SK-N-SH (cell line): ENCODE measurements at regions of chr6 and their contacts with region 1.

Region 1: DNA sequence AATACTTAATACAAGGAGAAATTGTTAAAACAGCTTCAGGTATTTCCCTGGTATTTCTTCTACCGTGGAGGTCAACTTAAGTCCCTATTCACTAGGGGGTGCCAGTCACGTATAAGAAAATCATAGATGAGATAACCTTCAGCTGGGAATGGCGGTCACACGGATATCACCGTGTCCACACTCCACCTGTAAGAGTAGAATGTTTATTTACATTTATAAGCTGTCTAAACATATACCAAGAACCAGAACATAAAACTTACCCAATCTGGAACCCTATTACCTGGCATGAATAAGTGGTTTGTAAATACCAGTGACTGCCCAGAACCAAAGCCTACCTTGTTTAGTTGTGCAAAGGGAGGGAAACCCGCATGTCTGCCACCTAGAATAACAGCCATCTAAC is 1.9 kb upstream of the ELOVL4 start:
- DNase-seq: peak; percentile 49
- H3K4me3 ChIP-seq: peak overlapping the region in 1 of 2 experiments; percentile 9; a peak in 1 of 4 replicates
- H3K27ac ChIP-seq: no peak overlapping the region
- H3K4me1 ChIP-seq: peaks cover 4 to 17% of the 10 kb centered on the region in 2 experiments; a peak in 3 of 4 replicates
- H3K27me3 ChIP-seq: no peaks in the 10 kb centered on the region
- CTCF ChIP-seq: peak; percentile 84
- EP300 ChIP-seq: no peak
- RAD21 ChIP-seq: peak; percentile 79

Region 2: GRCh38 chr6:79257381-79258205 is 691.6 kb before region 1 on chr6:
- CTCF ChIA-PET with region 1: no interaction called
- POLR2A ChIA-PET with region 1: no interaction called
- DNase-seq: no peak
- H3K4me3 ChIP-seq: no peak overlapping the region
- H3K27ac ChIP-seq: no peak overlapping the region; a peak in 1 of 4 replicates
- H3K4me1 ChIP-seq: no peaks in the 10 kb centered on the region
- H3K27me3 ChIP-seq: no peaks in the 10 kb centered on the region
- CTCF ChIP-seq: no peak
- EP300 ChIP-seq: no peak
- RAD21 ChIP-seq: no peak

Region 3: DNA sequence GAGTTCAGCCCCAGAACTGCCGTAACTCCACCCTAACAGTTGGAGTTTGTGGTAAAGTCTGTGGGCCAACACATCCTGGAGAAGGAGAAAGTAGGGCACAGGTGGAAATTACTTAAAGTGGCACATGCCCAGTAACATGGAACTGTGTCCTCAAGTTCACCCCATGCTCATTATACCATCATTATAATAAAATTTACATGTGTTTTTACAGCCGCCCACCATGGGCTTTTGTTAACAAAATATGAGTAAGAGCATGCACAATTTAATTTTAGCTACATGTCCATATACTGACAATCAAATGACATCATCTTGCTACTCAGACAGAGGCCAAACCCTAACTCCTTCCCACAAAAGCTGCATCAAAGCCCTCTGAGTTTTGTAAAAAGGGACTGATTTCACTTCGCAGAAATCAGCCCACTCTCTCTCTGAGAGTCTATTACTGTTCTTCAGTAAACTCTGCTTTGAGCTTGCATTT is 15.4 kb after region 1 on chr6:
- CTCF ChIA-PET with region 1: interaction called, 11 read pairs
- POLR2A ChIA-PET with region 1: no interaction called
- DNase-seq: no peak
- H3K4me3 ChIP-seq: no peak overlapping the region
- H3K27ac ChIP-seq: no peak overlapping the region
- H3K4me1 ChIP-seq: no peaks in the 10 kb centered on the region
- H3K27me3 ChIP-seq: no peaks in the 10 kb centered on the region
- CTCF ChIP-seq: no peak
- EP300 ChIP-seq: no peak
- RAD21 ChIP-seq: no peak

Region 4: DNA sequence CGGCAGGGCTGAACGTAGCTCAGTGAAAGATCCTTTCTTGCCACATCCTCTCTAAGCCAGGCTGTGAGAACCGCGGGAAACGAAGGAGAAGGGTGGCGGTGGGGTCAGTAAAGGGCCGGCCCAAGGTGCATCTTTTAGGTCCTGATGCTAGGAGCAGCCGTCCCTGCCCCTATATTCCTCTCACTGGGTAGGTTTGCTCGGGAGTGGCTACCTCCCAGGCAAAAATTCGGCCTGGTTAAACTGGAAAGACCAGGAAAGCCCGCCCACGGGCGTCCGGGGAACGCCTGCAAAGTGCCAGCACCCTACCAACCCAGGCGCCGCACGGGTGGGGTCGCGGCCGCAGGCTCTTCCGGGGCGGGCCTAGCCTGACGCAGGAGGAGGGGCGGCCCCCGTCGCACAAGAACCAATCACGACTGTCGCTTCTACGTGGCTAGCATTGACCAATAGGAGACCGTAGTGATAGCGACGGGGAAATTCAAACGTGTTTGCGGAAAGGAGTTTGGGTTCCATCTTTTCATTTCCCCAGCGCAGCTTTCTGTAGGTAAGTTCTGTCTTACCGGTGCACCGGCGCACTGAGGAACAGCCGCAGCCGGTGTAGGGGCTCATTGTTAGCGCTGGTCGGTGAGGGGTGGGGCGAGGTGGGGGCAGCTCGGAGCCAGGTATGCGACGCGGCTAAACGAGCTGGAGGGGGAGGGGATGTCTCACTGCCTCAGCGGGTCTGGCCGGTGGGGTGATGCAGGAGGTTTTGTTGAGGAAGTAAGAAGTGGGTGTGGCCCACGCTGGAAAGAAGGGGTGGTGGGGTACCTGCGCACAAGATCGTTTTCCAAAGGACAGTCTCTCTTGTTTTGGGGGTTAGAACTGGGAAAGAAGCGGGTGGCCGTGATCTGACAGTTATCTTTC is 55.2 kb after region 1 on chr6 and contains the start of gene TTK:
- CTCF ChIA-PET with region 1: interaction called, 11 read pairs
- POLR2A ChIA-PET with region 1: no interaction called
- DNase-seq: peak; percentile 94
- H3K4me3 ChIP-seq: peak within 1 kb of the TSS; percentile 62 to 81
- H3K27ac ChIP-seq: peak within 1 kb of the TSS; percentile 90 to 95
- H3K4me1 ChIP-seq: peaks cover 12 to 15% of the 10 kb centered on the region in 2 experiments
- H3K27me3 ChIP-seq: no peaks in the 10 kb centered on the region
- CTCF ChIP-seq: no peak
- EP300 ChIP-seq: 0 out of 4 replicates have a peak, but pooled peaks of 1 of the 2 experiments have one; percentile 18
- RAD21 ChIP-seq: no peak
- polyA plus RNA-seq, gene TTK: 3.6 and 4.1 TPM in 2 replicates

Region 5: DNA sequence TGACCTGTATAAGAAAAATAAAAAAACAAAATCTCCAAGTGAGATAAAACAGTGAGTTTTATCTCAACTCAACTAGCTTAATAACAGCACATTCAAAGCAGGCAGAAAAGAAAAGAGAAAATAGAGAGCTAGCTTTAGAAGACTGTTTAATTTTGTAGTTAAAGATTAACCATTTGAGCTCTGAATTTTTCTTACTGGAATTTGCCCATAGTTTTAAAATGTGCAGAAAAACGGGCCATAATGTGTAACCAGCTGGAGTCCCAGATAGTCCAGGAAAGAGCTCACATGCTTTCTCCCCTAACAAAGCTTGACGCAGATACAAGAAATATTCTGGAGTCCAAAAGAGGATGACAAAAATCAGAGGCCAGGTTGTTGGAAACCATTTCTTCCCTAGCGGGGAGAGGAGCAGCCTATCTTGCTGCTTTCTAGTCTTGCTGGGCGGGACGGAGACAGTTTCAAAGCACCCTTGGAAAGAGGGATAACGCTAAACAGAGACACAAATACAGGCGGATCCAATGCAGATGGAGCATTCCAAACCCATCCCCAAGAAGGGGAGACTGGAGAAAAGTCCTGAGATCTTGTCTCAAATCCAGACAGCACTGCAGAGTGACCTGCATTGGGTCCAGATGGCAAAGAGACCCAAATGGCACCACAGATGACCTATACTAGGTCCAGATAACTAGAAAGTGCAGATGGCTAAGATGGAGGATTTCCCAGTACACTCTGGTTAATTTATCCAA is 71.3 kb after region 1 on chr6:
- CTCF ChIA-PET with region 1: interaction called, 11 read pairs
- POLR2A ChIA-PET with region 1: no interaction called
- DNase-seq: no peak
- H3K4me3 ChIP-seq: no peak overlapping the region
- H3K27ac ChIP-seq: peak overlapping the region; percentile 4 to 39; a peak in 2 of 4 replicates
- H3K4me1 ChIP-seq: peaks cover 5 to 10% of the 10 kb centered on the region in 2 experiments; a peak in 3 of 4 replicates
- H3K27me3 ChIP-seq: no peaks in the 10 kb centered on the region
- CTCF ChIP-seq: no peak
- EP300 ChIP-seq: no peak
- RAD21 ChIP-seq: no peak

Region 6: DNA sequence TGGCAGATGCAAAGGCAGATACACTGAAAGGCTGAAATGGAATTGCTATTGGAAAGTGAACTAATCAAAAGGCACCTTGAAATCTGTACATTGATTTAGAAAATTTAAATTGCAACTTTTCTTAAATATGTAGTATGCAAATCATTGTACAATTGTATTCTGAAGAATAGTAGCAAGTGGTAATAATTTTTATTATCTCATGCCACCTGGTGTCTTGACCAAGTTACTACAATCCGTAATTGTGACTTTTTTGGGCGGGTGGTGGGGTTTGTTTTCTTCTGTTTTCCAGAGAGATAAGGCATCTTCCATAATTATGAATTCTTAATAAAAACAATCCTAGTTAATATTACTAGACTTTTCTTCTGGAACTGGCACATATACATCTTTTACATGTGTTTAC is 144.8 kb after region 1 on chr6:
- CTCF ChIA-PET with region 1: interaction called, 98 read pairs
- POLR2A ChIA-PET with region 1: no interaction called
- DNase-seq: peak; percentile 52
- H3K4me3 ChIP-seq: no peak overlapping the region
- H3K27ac ChIP-seq: no peak overlapping the region
- H3K4me1 ChIP-seq: no peaks in the 10 kb centered on the region
- H3K27me3 ChIP-seq: no peaks in the 10 kb centered on the region
- CTCF ChIP-seq: peak; percentile 74
- EP300 ChIP-seq: no peak
- RAD21 ChIP-seq: peak; percentile 75

Region 7: GRCh38 chr6:80106418-80107235 is 157.4 kb after region 1 on chr6 and contains the start of gene BCKDHB:
- CTCF ChIA-PET with region 1: interaction called, 10 read pairs
- POLR2A ChIA-PET with region 1: interaction called, 5 read pairs
- DNase-seq: peak; percentile 97
- H3K4me3 ChIP-seq: peak within 1 kb of the TSS; percentile 88 to 89
- H3K27ac ChIP-seq: peak within 1 kb of the TSS; percentile 68 to 82
- H3K4me1 ChIP-seq: peaks cover 0 to 4% of the 10 kb centered on the region in 2 experiments; a peak in 3 of 4 replicates
- H3K27me3 ChIP-seq: no peaks in the 10 kb centered on the region
- CTCF ChIP-seq: no peak
- EP300 ChIP-seq: 0 out of 4 replicates have a peak, but pooled peaks of 1 of the 2 experiments have one; percentile 18
- RAD21 ChIP-seq: no peak
- polyA plus RNA-seq, gene BCKDHB: 19.9 and 26.9 TPM in 2 replicates

Region 8: DNA sequence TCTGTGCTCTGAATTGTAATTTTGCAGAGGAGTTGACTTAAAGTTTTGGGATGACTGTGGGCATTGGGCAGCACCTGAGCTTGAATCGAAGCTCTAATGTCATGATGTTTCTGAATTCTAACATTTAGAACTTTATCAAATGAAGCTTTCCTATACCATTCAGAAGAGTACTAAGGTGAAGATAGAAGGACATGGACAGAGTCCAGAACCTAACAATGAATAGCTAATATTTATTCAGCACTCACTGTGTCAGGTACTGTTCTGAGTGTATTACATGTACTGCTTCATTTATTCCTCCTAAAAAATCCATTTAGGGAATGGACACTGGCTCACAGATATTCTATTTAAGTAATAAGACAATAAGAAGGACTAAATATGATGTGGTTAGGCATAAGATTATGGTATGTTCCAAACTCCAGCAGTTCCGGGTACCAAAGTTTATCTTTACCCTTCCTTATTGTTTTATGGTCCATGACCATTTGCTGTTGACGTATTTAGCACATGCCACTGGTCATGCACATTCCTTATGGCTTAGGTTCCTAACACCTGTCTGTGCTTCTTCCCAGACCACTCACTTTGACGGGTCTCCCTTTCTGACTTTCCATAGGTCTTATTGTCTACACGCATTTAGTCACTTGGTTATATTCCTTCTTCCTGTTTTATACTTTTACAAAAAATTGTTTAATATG is 177.6 kb after region 1 on chr6:
- CTCF ChIA-PET with region 1: no interaction called
- POLR2A ChIA-PET with region 1: no interaction called
- DNase-seq: no peak
- H3K4me3 ChIP-seq: no peak overlapping the region
- H3K27ac ChIP-seq: peak overlapping the region in 1 of 2 experiments; percentile 88; a peak in 1 of 4 replicates
- H3K4me1 ChIP-seq: no peaks in the 10 kb centered on the region; a peak in 1 of 4 replicates
- H3K27me3 ChIP-seq: no peaks in the 10 kb centered on the region
- CTCF ChIP-seq: no peak
- EP300 ChIP-seq: no peak
- RAD21 ChIP-seq: no peak

Region 9: DNA sequence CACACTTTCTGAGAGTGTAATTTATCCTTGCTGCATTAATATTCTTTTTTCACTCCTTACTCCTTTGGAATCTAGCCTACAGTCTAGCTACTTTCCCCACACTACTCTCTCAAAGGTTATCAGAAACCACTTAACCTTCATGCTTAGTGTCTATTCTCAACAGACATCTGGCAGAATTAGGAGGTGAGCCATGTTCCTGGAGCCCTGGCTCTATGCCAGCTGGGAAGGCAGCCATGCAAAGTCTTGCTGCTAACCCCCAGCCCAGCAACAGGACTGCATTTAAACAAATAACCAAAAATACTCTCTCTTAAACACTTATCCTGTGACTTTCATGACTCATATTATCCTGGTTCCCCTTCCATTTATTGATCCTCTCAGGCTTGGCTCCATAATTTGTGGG is 417.5 kb after region 1 on chr6:
- CTCF ChIA-PET with region 1: no interaction called
- POLR2A ChIA-PET with region 1: no interaction called
- DNase-seq: peak; percentile 55
- H3K4me3 ChIP-seq: no peak overlapping the region
- H3K27ac ChIP-seq: no peak overlapping the region
- H3K4me1 ChIP-seq: peaks cover 0 to 3% of the 10 kb centered on the region in 2 experiments; a peak in 2 of 4 replicates
- H3K27me3 ChIP-seq: no peaks in the 10 kb centered on the region
- CTCF ChIP-seq: no peak
- EP300 ChIP-seq: no peak
- RAD21 ChIP-seq: no peak